PC-3 (cell line): ENCODE measurements at regions of chr12 and their contacts with region 1.

Region 1: DNA sequence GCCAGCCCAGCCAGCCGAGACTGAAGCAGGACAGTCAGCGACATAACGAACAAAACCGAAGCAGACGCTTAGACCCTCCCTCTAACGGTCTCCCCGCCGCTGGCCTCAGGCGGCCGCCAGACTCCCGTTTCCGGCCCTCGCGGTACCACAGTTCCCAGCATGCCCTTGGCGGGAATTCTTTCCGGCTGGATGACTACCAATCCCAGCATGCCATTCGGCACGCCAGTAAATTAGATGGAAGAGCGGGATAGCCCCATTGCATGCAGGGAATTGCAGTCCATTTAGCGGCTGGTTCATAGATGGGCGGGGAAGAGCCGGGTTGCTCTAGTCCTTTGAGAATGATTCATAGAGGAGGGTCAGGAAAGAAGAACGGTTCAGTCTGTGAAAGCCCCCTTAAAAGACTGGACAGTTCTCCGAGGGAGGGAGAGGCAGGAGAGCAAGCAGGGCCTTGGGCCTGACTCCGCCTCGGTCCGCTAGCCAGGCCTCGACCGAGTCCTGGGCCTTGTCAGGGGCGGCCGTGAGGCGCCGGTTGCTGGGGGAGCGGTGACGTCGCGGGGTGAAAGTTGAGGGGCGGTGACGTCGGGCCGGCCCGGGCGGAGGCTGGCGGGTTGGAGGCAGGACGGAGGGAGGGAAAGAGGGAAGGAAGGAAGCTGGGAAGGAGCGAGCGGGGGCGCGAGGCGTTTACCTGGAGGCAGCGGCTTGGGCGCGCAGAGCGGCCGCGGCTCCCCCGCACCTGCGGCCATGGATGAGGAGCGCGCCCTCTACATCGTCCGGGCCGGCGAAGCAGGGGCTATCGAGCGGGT is at the start of gene RIC8B:
- DNase-seq: peak; percentile 99
- ATAC-seq: peak; percentile 94
- H3K4me3 ChIP-seq: peak within 1 kb of the TSS; percentile 88
- H3K27ac ChIP-seq: peak within 1 kb of the TSS; percentile 85
- H3K4me1 ChIP-seq: peaks cover 16% of the 10 kb centered on the region
- H3K27me3 ChIP-seq: peaks cover 3% of the 10 kb centered on the region
- CTCF ChIP-seq: no peak
- total RNA-seq, gene RIC8B: 8.6 and 8.8 TPM in 2 replicates

Region 2: GRCh38 chr12:106357549-106358395 is 416.4 kb before region 1 on chr12 and contains the start of gene POLR3B:
- CTCF ChIA-PET with region 1: no interaction called
- POLR2A ChIA-PET with region 1: no interaction called
- intact Hi-C with region 1: loop called (anchors 5 kb)
- DNase-seq: peak; percentile 97
- ATAC-seq: peak; percentile 85
- H3K4me3 ChIP-seq: peak within 1 kb of the TSS; percentile 82
- H3K27ac ChIP-seq: peak within 1 kb of the TSS; percentile 70
- H3K4me1 ChIP-seq: peaks cover 18% of the 10 kb centered on the region
- H3K27me3 ChIP-seq: no peaks in the 10 kb centered on the region
- CTCF ChIP-seq: peak; percentile 93
- total RNA-seq, gene POLR3B: 23.4 and 24.3 TPM in 2 replicates

Region 3: GRCh38 chr12:106841510-106842302 is 67.5 kb after region 1 on chr12:
- CTCF ChIA-PET with region 1: no interaction called
- POLR2A ChIA-PET with region 1: no interaction called
- intact Hi-C with region 1: loop called (anchors 2 kb)
- DNase-seq: peak; percentile 71
- ATAC-seq: peak; percentile 68
- H3K4me3 ChIP-seq: no peak overlapping the region
- H3K27ac ChIP-seq: no peak overlapping the region
- H3K4me1 ChIP-seq: peaks cover 25% of the 10 kb centered on the region
- H3K27me3 ChIP-seq: no peaks in the 10 kb centered on the region
- CTCF ChIP-seq: peak; percentile 91

Region 4: GRCh38 chr12:106871496-106871895 is 97.3 kb after region 1 on chr12:
- CTCF ChIA-PET with region 1: no interaction called
- POLR2A ChIA-PET with region 1: no interaction called
- intact Hi-C with region 1: no loop called
- DNase-seq: peak; percentile 80
- ATAC-seq: peak; percentile 74
- H3K4me3 ChIP-seq: no peak overlapping the region
- H3K27ac ChIP-seq: no peak overlapping the region
- H3K4me1 ChIP-seq: peaks cover 13% of the 10 kb centered on the region
- H3K27me3 ChIP-seq: no peaks in the 10 kb centered on the region
- CTCF ChIP-seq: no peak

Region 5: DNA sequence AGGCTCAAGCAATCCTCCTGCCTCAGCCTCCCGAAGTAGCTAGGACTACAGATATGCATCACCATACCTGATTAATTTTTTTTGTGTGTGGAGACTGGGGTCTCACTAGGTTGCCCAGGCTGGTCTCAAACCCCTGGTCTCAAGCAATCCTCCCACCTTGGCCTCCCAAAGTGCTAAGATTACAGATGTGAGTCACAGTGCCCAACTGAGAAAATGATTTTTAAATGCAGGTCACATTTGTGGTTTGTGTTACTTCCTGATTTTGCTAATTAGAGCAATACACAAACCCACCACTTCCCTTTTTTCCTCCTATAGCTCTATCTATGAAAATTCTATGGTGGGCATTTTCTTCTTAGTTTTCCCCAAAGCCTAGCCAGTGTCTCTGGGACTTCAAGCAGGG is 136.0 kb after region 1 on chr12:
- CTCF ChIA-PET with region 1: no interaction called
- POLR2A ChIA-PET with region 1: no interaction called
- intact Hi-C with region 1: no loop called
- DNase-seq: no peak
- ATAC-seq: no peak
- H3K4me3 ChIP-seq: no peak overlapping the region
- H3K27ac ChIP-seq: no peak overlapping the region
- H3K4me1 ChIP-seq: no peaks in the 10 kb centered on the region
- H3K27me3 ChIP-seq: no peaks in the 10 kb centered on the region
- CTCF ChIP-seq: no peak

Region 6: GRCh38 chr12:106955377-106956047 is 181.3 kb after region 1 on chr12 and contains the start of gene TMEM263:
- CTCF ChIA-PET with region 1: no interaction called
- POLR2A ChIA-PET with region 1: no interaction called
- intact Hi-C with region 1: loop called (anchors 5 kb)
- DNase-seq: peak; percentile 94
- ATAC-seq: peak; percentile 77
- H3K4me3 ChIP-seq: peak within 1 kb of the TSS; percentile 80
- H3K27ac ChIP-seq: peak within 1 kb of the TSS; percentile 32
- H3K4me1 ChIP-seq: peaks cover 20% of the 10 kb centered on the region
- H3K27me3 ChIP-seq: no peaks in the 10 kb centered on the region
- CTCF ChIP-seq: 0 out of 2 replicates have a peak, but pooled peaks have one; percentile 23
- total RNA-seq, gene TMEM263: 42.7 and 59.7 TPM in 2 replicates

Region 7: DNA sequence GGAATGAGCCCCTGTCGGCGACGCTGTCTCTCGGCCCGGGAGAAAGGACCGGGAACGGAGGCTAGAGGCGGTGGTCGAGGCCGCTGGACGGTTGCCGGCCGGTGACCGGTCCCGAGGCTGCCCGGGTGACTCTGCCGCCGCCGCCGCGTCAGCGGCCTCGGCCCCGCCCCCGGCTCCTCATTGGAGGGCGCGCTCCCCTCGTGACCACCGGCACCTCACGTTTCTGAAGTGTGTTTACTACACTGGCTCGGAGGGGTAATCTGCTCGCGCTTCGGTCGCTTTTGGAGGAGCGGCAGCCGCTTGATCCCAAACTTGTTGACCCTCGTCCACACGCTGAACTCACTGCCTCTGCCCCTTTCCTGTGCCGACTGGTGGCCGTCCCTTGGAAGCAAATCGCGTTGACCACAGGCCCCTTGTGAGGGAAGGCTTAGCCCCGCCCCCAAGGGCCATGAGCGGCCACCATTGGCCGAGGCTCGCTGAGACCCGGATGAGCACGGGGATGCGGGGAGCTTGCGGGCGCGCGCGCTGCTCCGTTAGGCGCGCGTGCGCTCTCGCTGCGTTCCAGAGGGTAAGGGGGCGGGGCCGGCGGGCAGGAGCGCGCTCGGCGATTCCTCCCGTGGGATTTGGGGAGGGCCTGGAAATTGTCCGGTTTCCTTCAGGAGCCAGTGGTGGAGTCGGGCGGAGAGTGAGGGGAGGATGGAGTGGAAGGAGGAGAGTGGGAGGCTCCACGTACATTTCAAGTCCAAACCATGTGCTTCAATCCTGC is 319.4 kb after region 1 on chr12 and contains the start of gene CRY1:
- CTCF ChIA-PET with region 1: no interaction called
- POLR2A ChIA-PET with region 1: no interaction called
- intact Hi-C with region 1: loop called (anchors 1 kb)
- DNase-seq: peak; percentile 98
- ATAC-seq: peak; percentile 75
- H3K4me3 ChIP-seq: peak within 1 kb of the TSS; percentile 72
- H3K27ac ChIP-seq: peak within 1 kb of the TSS; percentile 63
- H3K4me1 ChIP-seq: peaks cover 24% of the 10 kb centered on the region
- H3K27me3 ChIP-seq: no peaks in the 10 kb centered on the region
- CTCF ChIP-seq: no peak
- total RNA-seq, gene CRY1: 32.0 and 32.4 TPM in 2 replicates